B cell (primary cell): ENCODE measurements at regions of chr3 and their contacts with region 1.

Region 1: DNA sequence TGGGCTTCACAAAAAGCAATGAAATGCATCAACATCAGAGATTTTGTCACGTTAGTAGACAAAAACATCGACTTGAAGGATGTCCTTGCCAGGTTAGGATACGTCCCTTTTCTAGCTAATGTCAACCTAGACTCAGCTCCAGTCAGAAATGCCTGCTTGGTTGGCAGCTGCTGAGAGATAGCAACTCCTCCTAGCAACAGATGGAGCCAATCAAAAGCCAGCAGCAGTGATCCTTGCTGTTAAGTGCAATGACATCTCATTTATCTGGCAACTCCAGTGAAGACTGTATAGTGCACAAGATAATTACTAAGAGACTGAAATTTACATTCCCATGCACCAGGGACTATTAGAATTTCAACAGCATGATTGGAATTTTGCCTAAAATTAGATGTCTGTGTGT is 424.1 kb downstream of the FGF12 start:
- DNase-seq: no peak
- ATAC-seq: no peak
- H3K4me3 ChIP-seq: no peak overlapping the region
- H3K4me3 Mint-ChIP-seq: no peak overlapping the region
- H3K27ac ChIP-seq: no peak overlapping the region
- H3K27ac Mint-ChIP-seq: no peak overlapping the region
- H3K4me1 ChIP-seq: no peaks in the 10 kb centered on the region
- H3K4me1 Mint-ChIP-seq: no peaks in the 10 kb centered on the region
- H3K27me3 ChIP-seq: peaks cover 0 to 2% (median 0%) of the 10 kb centered on the region in 4 experiments
- H3K27me3 Mint-ChIP-seq: no peaks in the 10 kb centered on the region
- CTCF ChIP-seq: no peak

Region 2: GRCh38 chr3:192275741-192276355 is 27.4 kb before region 1 on chr3:
- CTCF ChIA-PET with region 1: no interaction called
- POLR2A ChIA-PET with region 1: no interaction called
- intact Hi-C with region 1: no loop called
- DNase-seq: no peak
- ATAC-seq: no peak
- H3K4me3 ChIP-seq: no peak overlapping the region
- H3K4me3 Mint-ChIP-seq: no peak overlapping the region
- H3K27ac ChIP-seq: no peak overlapping the region
- H3K27ac Mint-ChIP-seq: no peak overlapping the region
- H3K4me1 ChIP-seq: no peaks in the 10 kb centered on the region
- H3K4me1 Mint-ChIP-seq: no peaks in the 10 kb centered on the region
- H3K27me3 ChIP-seq: no peaks in the 10 kb centered on the region
- H3K27me3 Mint-ChIP-seq: no peaks in the 10 kb centered on the region
- CTCF ChIP-seq: no peak

Region 3: GRCh38 chr3:192316548-192316947 is 13.3 kb after region 1 on chr3:
- CTCF ChIA-PET with region 1: no interaction called
- POLR2A ChIA-PET with region 1: no interaction called
- intact Hi-C with region 1: no loop called
- DNase-seq: no peak
- ATAC-seq: no peak
- H3K4me3 ChIP-seq: no peak overlapping the region
- H3K4me3 Mint-ChIP-seq: no peak overlapping the region
- H3K27ac ChIP-seq: no peak overlapping the region
- H3K27ac Mint-ChIP-seq: no peak overlapping the region
- H3K4me1 ChIP-seq: no peaks in the 10 kb centered on the region
- H3K4me1 Mint-ChIP-seq: no peaks in the 10 kb centered on the region
- H3K27me3 ChIP-seq: no peaks in the 10 kb centered on the region
- H3K27me3 Mint-ChIP-seq: no peaks in the 10 kb centered on the region
- CTCF ChIP-seq: no peak

Region 4: DNA sequence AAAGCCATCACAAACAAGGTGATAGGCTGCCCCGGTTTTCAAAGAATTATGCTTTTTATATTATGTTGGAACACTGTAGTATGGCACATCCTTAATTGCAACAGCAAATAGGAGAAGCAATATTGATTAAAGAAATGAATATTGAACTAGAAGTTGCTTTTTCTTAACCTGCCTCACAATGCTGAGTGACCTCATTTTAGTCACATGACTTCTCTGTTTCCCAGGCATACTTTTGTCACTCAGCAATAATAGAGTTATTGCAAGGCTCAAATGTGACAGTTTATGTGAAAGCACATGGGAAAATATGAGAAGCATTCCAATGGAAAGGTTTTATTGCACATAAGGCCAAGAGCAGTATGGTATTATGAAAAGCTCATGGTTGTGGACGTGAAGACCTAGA is 23.4 kb after region 1 on chr3:
- CTCF ChIA-PET with region 1: no interaction called
- POLR2A ChIA-PET with region 1: no interaction called
- intact Hi-C with region 1: no loop called
- DNase-seq: no peak
- ATAC-seq: no peak
- H3K4me3 ChIP-seq: no peak overlapping the region
- H3K4me3 Mint-ChIP-seq: no peak overlapping the region
- H3K27ac ChIP-seq: no peak overlapping the region
- H3K27ac Mint-ChIP-seq: no peak overlapping the region
- H3K4me1 ChIP-seq: no peaks in the 10 kb centered on the region
- H3K4me1 Mint-ChIP-seq: peaks cover 3% of the 10 kb centered on the region
- H3K27me3 ChIP-seq: no peaks in the 10 kb centered on the region
- H3K27me3 Mint-ChIP-seq: no peaks in the 10 kb centered on the region
- CTCF ChIP-seq: no peak

Region 5: DNA sequence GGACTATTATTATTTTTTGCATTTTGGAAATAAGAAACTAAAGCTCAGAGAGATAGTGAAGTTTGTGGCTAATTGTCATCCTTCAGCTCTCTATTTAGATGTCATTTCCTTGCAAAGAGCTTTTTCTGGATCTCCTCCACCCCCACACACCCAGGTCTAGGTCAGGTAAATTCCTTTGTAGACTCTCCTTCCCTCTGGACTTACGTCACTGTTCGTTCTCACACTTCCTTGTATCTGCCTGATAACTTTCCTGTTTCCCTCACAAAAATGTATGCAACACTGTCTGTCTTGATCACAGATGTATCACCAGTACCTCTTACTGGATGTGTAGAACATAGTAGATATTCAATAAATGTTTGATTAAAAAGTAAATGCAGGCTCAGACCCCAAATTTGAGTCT is 620.5 kb after region 1 on chr3:
- CTCF ChIA-PET with region 1: no interaction called
- POLR2A ChIA-PET with region 1: no interaction called
- intact Hi-C with region 1: loop called (anchors 5 kb)
- DNase-seq: no peak
- ATAC-seq: no peak
- H3K4me3 ChIP-seq: no peak overlapping the region
- H3K4me3 Mint-ChIP-seq: no peak overlapping the region
- H3K27ac ChIP-seq: no peak overlapping the region
- H3K27ac Mint-ChIP-seq: no peak overlapping the region
- H3K4me1 ChIP-seq: no peaks in the 10 kb centered on the region
- H3K4me1 Mint-ChIP-seq: no peaks in the 10 kb centered on the region
- H3K27me3 ChIP-seq: peaks cover 0 to 14% (median 11%) of the 10 kb centered on the region in 4 experiments
- H3K27me3 Mint-ChIP-seq: peaks cover 29% of the 10 kb centered on the region
- CTCF ChIP-seq: no peak